Right cardiac atrium (tissue), 5 donors: ENCODE measurements at regions of chr3 and their contacts with region 1.

Region 1: DNA sequence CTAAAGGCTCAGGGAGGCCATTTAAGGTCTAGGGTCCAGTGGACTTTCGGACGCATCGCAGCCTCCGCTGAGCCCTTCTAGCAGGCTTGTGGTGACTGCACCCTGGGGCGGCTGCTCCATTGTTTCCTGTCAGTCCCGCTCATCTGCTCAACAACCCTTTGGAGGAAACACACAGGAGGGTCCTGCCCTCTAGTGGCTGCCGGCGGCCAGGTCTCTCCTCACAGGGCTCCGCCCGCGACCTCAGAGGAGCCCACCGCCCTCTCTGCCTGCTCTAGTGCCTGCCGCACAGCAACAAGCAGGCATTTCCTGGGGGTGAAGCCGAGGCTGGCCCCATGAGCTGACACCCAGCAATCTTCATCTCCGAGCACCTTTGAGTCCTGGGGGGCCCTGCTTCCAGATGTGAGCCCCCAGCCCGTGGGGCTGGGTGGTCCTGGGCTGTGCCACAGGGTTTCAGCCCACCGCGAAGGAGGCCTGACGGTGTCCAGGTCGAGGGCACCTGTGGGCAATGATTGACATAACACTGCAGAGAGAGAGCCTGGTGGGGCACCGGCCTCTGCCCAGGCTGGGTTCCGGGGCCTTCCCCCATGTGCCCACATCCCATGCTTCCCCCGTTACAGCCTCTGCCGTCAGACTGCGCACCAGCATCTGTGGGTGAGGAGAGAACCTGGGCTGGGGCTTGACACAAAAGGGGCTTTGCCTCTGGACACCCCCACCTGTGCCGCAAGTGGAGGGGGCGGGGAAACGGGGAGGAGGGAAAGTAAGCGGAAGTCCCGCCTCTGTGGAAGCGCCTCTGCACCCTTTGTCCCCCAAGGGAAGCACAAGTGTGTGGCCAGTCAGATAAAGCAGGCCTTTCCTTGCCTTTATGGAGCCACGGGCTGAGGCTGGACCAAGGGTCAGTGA is 27.0 kb upstream of the SFMBT1 start:
- DNase-seq: peak; percentile 83 to 95 (median 94)
- ATAC-seq: peak; percentile 94
- H3K4me3 ChIP-seq: peak overlapping the region; percentile 73
- H3K27ac ChIP-seq: peak overlapping the region; percentile 34
- H3K4me1 ChIP-seq: peaks cover 4% of the 10 kb centered on the region
- H3K27me3 ChIP-seq: no peaks in the 10 kb centered on the region

Region 2: DNA sequence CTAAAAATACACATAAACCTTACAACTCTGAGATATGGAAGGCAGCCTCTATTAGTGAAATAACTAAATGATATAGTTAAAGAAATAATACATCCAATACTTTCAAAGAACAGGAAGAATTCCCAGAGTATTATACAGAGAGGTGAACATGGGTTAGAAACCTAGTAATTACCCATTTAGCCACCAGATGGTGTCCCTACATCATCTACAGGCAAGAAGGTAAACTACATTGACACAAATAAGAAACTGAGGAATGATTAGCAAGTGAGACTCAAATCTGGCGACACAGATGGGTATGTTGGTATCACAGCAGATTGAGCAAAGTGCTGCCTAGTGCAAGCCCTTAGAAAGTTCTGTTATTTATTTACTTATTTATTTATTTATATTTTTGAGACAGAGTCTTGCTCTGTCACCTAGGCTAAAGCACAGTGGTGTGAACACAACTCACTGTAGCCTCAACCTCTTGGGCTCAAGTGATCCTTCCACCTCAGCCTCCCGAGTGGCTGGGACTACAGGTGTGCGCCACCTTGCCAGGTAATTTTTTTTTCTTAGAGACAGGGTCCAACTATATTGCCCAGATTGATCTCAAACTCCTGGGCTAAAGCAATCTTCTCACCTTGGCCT is 330.4 kb before region 1 on chr3:
- intact Hi-C with region 1: loop called in 1 of 4 experiments (anchors 10 kb)
- DNase-seq: no peak
- ATAC-seq: peak in 1 of 2 donors; percentile 42
- H3K4me3 ChIP-seq: no peak overlapping the region
- H3K27ac ChIP-seq: no peak overlapping the region
- H3K4me1 ChIP-seq: no peaks in the 10 kb centered on the region
- H3K27me3 ChIP-seq: no peaks in the 10 kb centered on the region

Region 3: GRCh38 chr3:52851348-52851747 is 221.6 kb before region 1 on chr3:
- intact Hi-C with region 1: loop called in 2 of 4 experiments (anchors 5 kb)
- DNase-seq: no peak
- ATAC-seq: peak; percentile 27 to 50
- H3K4me3 ChIP-seq: no peak overlapping the region
- H3K27ac ChIP-seq: no peak overlapping the region
- H3K4me1 ChIP-seq: no peaks in the 10 kb centered on the region
- H3K27me3 ChIP-seq: no peaks in the 10 kb centered on the region

Region 4: GRCh38 chr3:52897130-52898122 is 175.5 kb before region 1 on chr3 and contains the start of gene STIMATE:
- intact Hi-C with region 1: no loop called
- DNase-seq: peak; percentile 91 to 97 (median 96)
- ATAC-seq: peak; percentile 99
- H3K4me3 ChIP-seq: peak within 1 kb of the TSS; percentile 85
- H3K27ac ChIP-seq: peak within 1 kb of the TSS; percentile 45
- H3K4me1 ChIP-seq: peaks cover 7% of the 10 kb centered on the region
- H3K27me3 ChIP-seq: no peaks in the 10 kb centered on the region
- total RNA-seq, gene STIMATE: 6.6 to 9.3 (median 8.0) TPM

Region 5: GRCh38 chr3:52934630-52935530 is 138.0 kb before region 1 on chr3:
- intact Hi-C with region 1: loop called in 2 of 4 experiments (anchors 10 kb)
- DNase-seq: peak in 2 of 3 donors; percentile 25 to 54
- ATAC-seq: peak; percentile 79 to 85
- H3K4me3 ChIP-seq: no peak overlapping the region
- H3K27ac ChIP-seq: no peak overlapping the region
- H3K4me1 ChIP-seq: no peaks in the 10 kb centered on the region
- H3K27me3 ChIP-seq: no peaks in the 10 kb centered on the region